ENCODE measurements at regions of chr20 and their contacts with region 1.

Region 1: DNA sequence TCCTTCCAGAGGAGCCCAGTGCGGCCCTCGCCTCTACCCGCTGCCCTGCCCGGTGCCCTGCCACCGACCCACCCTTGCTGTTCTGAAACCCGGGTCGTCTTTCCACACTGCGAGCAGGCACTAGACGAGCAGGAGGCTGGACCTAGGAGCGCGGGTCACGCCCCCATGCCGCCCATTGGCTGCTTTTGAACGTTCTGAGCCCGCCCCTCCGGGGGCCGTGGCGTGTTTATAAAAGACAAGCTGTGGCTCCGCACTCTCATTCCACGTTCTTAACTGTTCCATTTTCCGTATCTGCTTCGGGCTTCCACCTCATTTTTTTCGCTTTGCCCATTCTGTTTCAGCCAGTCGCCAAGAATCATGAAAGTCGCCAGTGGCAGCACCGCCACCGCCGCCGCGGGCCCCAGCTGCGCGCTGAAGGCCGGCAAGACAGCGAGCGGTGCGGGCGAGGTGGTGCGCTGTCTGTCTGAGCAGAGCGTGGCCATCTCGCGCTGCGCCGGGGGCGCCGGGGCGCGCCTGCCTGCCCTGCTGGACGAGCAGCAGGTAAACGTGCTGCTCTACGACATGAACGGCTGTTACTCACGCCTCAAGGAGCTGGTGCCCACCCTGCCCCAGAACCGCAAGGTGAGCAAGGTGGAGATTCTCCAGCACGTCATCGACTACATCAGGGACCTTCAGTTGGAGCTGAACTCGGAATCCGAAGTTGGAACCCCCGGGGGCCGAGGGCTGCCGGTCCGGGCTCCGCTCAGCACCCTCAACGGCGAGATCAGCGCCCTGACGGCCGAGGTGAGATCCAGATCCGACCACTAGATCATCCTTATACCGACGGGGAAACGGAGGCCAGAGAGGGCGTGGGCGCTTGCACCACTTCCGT is at the start of gene ID1:
- DNase-seq: peak; percentile 78
- H3K4me3 ChIP-seq: peak within 1 kb of the TSS; percentile 90
- H3K27ac ChIP-seq: peak within 1 kb of the TSS; percentile 70
- H3K27me3 ChIP-seq: no peaks in the 10 kb centered on the region
- CTCF ChIP-seq: no peak
- polyA plus RNA-seq, gene ID1: 7.8 and 11.1 TPM in 2 replicates

Region 2: GRCh38 chr20:31403886-31404285 is 201.4 kb before region 1 on chr20:
- CTCF ChIA-PET with region 1: no interaction called
- POLR2A ChIA-PET with region 1: no interaction called
- DNase-seq: no peak
- H3K4me3 ChIP-seq: no peak overlapping the region
- H3K27ac ChIP-seq: no peak overlapping the region
- H3K27me3 ChIP-seq: no peaks in the 10 kb centered on the region
- CTCF ChIP-seq: no peak

Region 3: DNA sequence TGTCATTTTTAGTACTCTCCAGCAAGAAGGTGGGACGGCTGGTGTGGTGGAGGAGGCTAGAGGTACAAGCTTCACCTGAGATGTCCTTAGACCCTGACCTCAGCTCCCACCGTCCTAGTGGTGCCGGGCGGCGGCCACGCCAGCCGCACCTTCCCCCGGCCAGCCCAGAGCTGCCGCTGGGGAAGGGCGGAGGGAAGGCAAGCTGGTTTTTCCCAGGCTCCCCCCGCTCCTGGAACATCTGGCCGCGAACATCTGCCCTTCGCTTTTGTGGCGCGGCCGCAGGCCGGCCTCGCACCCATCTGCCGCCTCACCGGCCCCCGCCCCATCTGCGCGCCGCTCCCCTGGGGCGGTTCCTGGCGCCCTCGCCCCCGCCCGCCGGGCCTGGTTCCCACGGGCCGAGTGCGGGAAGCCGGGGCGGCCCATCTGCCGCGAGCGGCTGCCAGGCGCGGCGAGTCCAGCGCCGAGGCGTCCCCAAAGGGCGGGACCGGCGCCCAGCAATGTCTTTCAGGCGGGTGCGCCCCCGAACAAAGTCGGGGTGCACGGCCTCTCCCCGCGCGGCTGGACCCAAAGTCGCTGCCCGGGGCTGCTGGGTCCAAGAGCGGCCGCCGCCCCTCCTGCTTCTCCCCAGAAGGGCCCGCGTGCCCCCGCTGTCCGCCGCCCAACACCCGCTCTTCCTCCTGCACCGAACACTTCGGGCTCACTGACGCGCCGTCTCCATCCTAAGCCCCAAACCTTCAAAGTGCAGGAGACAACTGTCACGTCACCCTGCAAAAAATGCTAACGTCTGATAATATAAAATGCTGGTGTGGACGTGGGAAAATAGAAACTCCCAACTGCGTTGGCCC is 17.5 kb before region 1 on chr20:
- CTCF ChIA-PET with region 1: no interaction called
- POLR2A ChIA-PET with region 1: interaction called, 12 read pairs
- DNase-seq: no peak
- H3K4me3 ChIP-seq: peak overlapping the region; percentile 49
- H3K27ac ChIP-seq: no peak overlapping the region
- H3K27me3 ChIP-seq: no peaks in the 10 kb centered on the region
- CTCF ChIP-seq: no peak

Region 4: DNA sequence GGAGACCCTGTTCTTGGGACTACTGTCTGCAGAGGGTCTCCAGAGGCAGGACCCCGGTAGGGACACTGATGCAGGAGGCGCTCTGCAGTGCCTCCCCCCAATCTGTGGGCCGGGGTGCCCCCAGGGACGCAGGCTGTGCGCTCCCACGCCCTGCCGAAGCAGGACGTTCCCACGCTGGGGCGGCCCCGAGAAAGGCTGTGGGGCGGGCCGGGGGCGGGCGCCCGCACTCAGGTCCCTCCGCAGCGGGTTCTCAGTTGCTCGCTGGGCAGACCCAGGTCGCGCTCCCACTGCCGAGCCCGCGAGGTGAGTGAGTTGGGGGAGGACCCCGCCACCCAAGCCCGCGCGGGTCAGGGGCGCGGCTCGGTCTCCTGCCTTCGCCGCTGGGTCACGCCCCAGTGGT is 32.4 kb after region 1 on chr20 and contains the start of gene COX4I2:
- CTCF ChIA-PET with region 1: interaction called, 61 read pairs
- POLR2A ChIA-PET with region 1: interaction called, 3 read pairs
- DNase-seq: no peak
- H3K4me3 ChIP-seq: no peak within 1 kb of the TSS
- H3K27ac ChIP-seq: no peak within 1 kb of the TSS
- H3K27me3 ChIP-seq: peaks cover 28% of the 10 kb centered on the region
- CTCF ChIP-seq: no peak
- polyA plus RNA-seq, gene COX4I2: not detected in 2 replicates

Region 5: DNA sequence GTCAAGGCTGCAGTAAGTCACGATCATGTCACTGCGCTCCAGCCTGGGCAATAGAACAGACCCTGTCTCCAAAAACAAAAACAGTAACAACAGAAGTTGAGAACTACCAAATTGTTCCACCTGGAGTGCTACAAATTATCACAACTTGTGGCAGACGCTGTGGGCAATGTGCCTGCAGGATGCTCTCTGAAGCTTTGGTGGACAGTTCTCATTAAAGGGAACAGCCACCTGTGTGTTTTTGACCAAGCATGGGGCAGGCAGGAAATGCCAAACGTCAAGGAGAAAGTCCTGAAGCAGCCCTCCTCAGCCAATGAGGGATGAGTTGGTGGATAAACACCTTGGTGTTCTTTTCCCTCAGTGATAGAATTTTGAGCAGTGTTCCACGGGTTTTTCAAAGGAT is 48.3 kb after region 1 on chr20:
- CTCF ChIA-PET with region 1: no interaction called
- POLR2A ChIA-PET with region 1: interaction called, 11 read pairs
- DNase-seq: no peak
- H3K4me3 ChIP-seq: no peak overlapping the region
- H3K27ac ChIP-seq: no peak overlapping the region
- H3K27me3 ChIP-seq: no peaks in the 10 kb centered on the region
- CTCF ChIP-seq: no peak

Measured in AG04450 (cell line).